PC-9 (cell line): ENCODE measurements at regions of chr19 and their contacts with region 1.

Region 1: GRCh38 chr19:4007021-4007835 is at the start of gene PIAS4:
- DNase-seq: peak; percentile 72 to 91
- H3K4me3 ChIP-seq: peak within 1 kb of the TSS; percentile 90
- H3K27ac ChIP-seq: no peak within 1 kb of the TSS
- H3K4me1 ChIP-seq: no peaks in the 10 kb centered on the region
- H3K27me3 ChIP-seq: no peaks in the 10 kb centered on the region
- CTCF ChIP-seq: no peak
- total RNA-seq, gene PIAS4: 25.5 and 26.5 TPM in 2 replicates

Region 2: DNA sequence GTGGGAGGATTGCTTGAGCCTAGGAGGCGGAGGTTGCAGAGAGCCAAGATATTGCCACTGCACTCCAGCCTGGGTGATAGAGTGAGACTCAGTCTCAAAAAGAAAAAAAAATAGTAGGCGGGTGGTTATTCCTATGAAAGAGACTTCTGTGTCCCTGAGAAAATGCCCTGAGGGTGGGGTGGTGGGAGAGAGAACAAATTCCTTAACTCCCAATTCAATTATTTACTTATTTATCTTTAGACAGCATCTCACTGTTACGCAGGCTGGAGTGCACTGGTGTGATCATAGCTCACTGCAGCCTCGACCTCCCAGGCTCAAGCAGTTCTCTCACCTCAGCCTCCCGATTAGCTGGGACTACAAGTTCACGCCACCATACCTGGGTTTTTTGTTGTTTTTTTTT is 11.6 kb before region 1 on chr19:
- CTCF ChIA-PET with region 1: no interaction called
- POLR2A ChIA-PET with region 1: interaction called, 12 read pairs
- intact Hi-C with region 1: no loop called
- DNase-seq: peak in 1 of 2 experiments; percentile 34
- H3K4me3 ChIP-seq: no peak overlapping the region
- H3K27ac ChIP-seq: no peak overlapping the region
- H3K4me1 ChIP-seq: no peaks in the 10 kb centered on the region
- H3K27me3 ChIP-seq: no peaks in the 10 kb centered on the region
- CTCF ChIP-seq: no peak

Region 3: GRCh38 chr19:4077882-4078614 is 70.8 kb after region 1 on chr19:
- CTCF ChIA-PET with region 1: no interaction called
- POLR2A ChIA-PET with region 1: no interaction called
- intact Hi-C with region 1: no loop called
- DNase-seq: no peak
- H3K4me3 ChIP-seq: no peak overlapping the region
- H3K27ac ChIP-seq: no peak overlapping the region
- H3K4me1 ChIP-seq: peaks cover 2% of the 10 kb centered on the region; the same call in 1 of the 2 replicates
- H3K27me3 ChIP-seq: no peaks in the 10 kb centered on the region
- CTCF ChIP-seq: no peak